Endothelial cell of umbilical vein (primary cell): ENCODE measurements at regions of chr6 and their contacts with region 1.

Region 1: GRCh38 chr6:27592481-27593199 is 119.7 kb upstream of the ZNF184 start:
- DNase-seq: peak; percentile 44
- H3K4me3 ChIP-seq: peak overlapping the region in 2 of 3 experiments; percentile 54 to 69
- H3K27ac ChIP-seq: no peak overlapping the region
- H3K4me1 ChIP-seq: peaks cover 10% of the 10 kb centered on the region
- H3K27me3 ChIP-seq: peaks cover 13 to 14% of the 10 kb centered on the region in 2 experiments
- CTCF ChIP-seq: no peak
- POLR2A ChIP-seq: no peak

Region 2: GRCh38 chr6:27049863-27050781 is 542.5 kb before region 1 on chr6:
- CTCF ChIA-PET with region 1: no interaction called
- POLR2A ChIA-PET with region 1: no interaction called
- dilution Hi-C with region 1: no loop called
- intact Hi-C with region 1: no loop called
- DNase-seq: no peak
- H3K4me3 ChIP-seq: no peak overlapping the region
- H3K27ac ChIP-seq: no peak overlapping the region
- H3K4me1 ChIP-seq: no peaks in the 10 kb centered on the region
- H3K27me3 ChIP-seq: no peaks in the 10 kb centered on the region
- CTCF ChIP-seq: no peak
- POLR2A ChIP-seq: no peak

Region 3: GRCh38 chr6:27428966-27429365 is 163.7 kb before region 1 on chr6:
- CTCF ChIA-PET with region 1: no interaction called
- POLR2A ChIA-PET with region 1: no interaction called
- dilution Hi-C with region 1: no loop called
- intact Hi-C with region 1: no loop called
- DNase-seq: no peak
- H3K4me3 ChIP-seq: no peak overlapping the region
- H3K27ac ChIP-seq: no peak overlapping the region
- H3K4me1 ChIP-seq: no peaks in the 10 kb centered on the region
- H3K27me3 ChIP-seq: no peaks in the 10 kb centered on the region
- CTCF ChIP-seq: no peak
- POLR2A ChIP-seq: no peak

Region 4: DNA sequence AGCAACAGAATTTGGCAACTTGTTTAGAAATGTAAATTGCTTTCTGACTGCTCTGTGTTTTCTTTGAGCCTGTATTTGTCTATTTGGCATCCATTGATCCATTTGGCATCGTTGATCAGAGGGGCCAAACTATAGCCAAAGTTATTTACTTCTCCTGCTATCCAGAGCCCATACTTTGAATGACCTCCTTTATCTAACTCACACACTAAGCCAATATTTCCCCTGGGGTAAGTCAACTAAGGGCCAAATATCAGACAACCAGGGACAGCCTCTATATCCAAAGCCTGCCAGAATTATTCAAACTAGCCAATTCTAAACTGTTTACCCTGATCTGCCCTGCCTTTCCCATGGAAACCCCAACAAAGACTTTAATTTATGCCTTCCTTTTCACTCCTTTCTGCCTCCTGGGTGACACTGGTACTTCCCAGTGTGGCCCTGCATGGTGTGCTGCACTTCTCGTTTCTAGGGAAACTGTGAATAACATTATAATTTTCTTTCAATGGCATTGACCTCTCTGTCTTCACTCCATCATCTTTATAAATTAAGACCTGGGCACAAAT is 99.9 kb before region 1 on chr6:
- CTCF ChIA-PET with region 1: no interaction called
- POLR2A ChIA-PET with region 1: no interaction called
- dilution Hi-C with region 1: no loop called
- intact Hi-C with region 1: no loop called
- DNase-seq: no peak
- H3K4me3 ChIP-seq: no peak overlapping the region
- H3K27ac ChIP-seq: no peak overlapping the region
- H3K4me1 ChIP-seq: peaks cover 7% of the 10 kb centered on the region
- H3K27me3 ChIP-seq: peaks cover 3 to 14% of the 10 kb centered on the region in 2 experiments
- CTCF ChIP-seq: no peak
- POLR2A ChIP-seq: no peak

Region 5: DNA sequence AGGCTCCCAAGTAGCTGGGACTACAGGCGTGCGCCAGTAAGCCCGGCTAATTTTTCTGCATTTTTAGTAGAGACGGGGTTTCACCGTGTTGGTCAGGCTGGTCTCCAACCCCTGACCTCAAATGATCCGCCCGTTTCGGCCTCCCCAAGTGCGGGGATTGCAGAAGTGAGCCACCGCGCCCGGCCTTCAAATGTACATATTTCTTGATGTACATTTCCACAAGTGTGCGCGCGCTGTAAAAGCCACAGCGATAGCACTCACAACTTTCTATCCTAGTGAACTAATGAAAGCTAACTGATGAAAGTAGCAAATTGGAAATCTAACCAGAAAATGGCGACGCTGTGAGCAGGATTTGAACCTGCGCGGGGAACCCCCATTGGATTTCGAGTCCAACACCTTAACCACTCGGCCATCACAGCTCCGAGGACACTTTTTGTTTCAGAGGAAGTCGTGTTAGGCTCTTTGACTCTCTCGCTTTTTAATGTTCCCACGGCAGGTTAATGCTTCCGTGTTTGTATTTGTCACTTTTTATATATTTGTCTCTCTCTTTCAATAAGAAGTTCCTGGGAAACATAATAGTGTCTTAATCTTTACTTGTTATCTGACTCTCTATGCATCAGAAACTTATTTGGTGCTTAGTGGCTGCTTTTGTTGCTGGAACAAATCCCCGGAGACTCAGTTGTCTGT is 79.6 kb after region 1 on chr6:
- CTCF ChIA-PET with region 1: no interaction called
- POLR2A ChIA-PET with region 1: no interaction called
- dilution Hi-C with region 1: no loop called
- intact Hi-C with region 1: loop called (anchors 5 kb)
- DNase-seq: peak; percentile 40
- H3K4me3 ChIP-seq: no peak overlapping the region
- H3K27ac ChIP-seq: no peak overlapping the region
- H3K4me1 ChIP-seq: peaks cover 10% of the 10 kb centered on the region
- H3K27me3 ChIP-seq: peaks cover 7 to 11% of the 10 kb centered on the region in 2 experiments
- CTCF ChIP-seq: no peak
- POLR2A ChIP-seq: no peak